H1 (cell line): ENCODE measurements at regions of chr12 and their contacts with region 1.

Region 1: GRCh38 chr12:14239350-14239934 is 126.0 kb upstream of the ATF7IP start:
- DNase-seq: peak in 1 of 2 experiments; percentile 61
- H3K4me3 ChIP-seq: peak overlapping the region in 1 of 4 experiments; percentile 26; a peak in 1 of 8 replicates
- H3K27ac ChIP-seq: no peak overlapping the region; the same call in 1 of the 2 replicates
- H3K4me1 ChIP-seq: peaks cover 2 to 12% (median 5%) of the 10 kb centered on the region in 4 experiments; a peak in 6 of 7 replicates
- H3K27me3 ChIP-seq: no peaks in the 10 kb centered on the region
- CTCF ChIP-seq: peak in 2 of 3 experiments; percentile 6 to 21; a peak in 2 of 4 replicates
- EP300 ChIP-seq: no peak
- POLR2A ChIP-seq: 0 out of 3 replicates have a peak, but pooled peaks of 1 of the 2 experiments have one; percentile 27
- RAD21 ChIP-seq: peak; percentile 22 to 35

Region 2: GRCh38 chr12:14185427-14186192 is 53.8 kb before region 1 on chr12:
- CTCF ChIA-PET with region 1: interaction called, 19 read pairs
- POLR2A ChIA-PET with region 1: no interaction called
- DNase-seq: peak in 1 of 2 experiments; percentile 60
- H3K4me3 ChIP-seq: no peak overlapping the region
- H3K27ac ChIP-seq: no peak overlapping the region
- H3K4me1 ChIP-seq: no peaks in the 10 kb centered on the region; a peak in 1 of 7 replicates
- H3K27me3 ChIP-seq: no peaks in the 10 kb centered on the region
- CTCF ChIP-seq: peak in 2 of 3 experiments; percentile 61 to 78; a peak in 3 of 4 replicates
- EP300 ChIP-seq: no peak
- POLR2A ChIP-seq: no peak
- RAD21 ChIP-seq: peak; percentile 74 to 80

Region 3: GRCh38 chr12:14357486-14357885 is 118.0 kb after region 1 on chr12:
- CTCF ChIA-PET with region 1: interaction called, 14 read pairs
- POLR2A ChIA-PET with region 1: no interaction called
- DNase-seq: no peak
- H3K4me3 ChIP-seq: no peak overlapping the region
- H3K27ac ChIP-seq: no peak overlapping the region
- H3K4me1 ChIP-seq: no peaks in the 10 kb centered on the region
- H3K27me3 ChIP-seq: no peaks in the 10 kb centered on the region
- CTCF ChIP-seq: no peak
- EP300 ChIP-seq: no peak
- POLR2A ChIP-seq: no peak
- RAD21 ChIP-seq: no peak

Region 4: GRCh38 chr12:14365294-14366208 is 126.1 kb after region 1 on chr12 and contains the start of gene ATF7IP:
- CTCF ChIA-PET with region 1: interaction called, 14 read pairs
- POLR2A ChIA-PET with region 1: interaction called, 17 read pairs
- DNase-seq: peak; percentile 88 to 93
- H3K4me3 ChIP-seq: peak within 1 kb of the TSS; percentile 65 to 90 (median 73)
- H3K27ac ChIP-seq: peak within 1 kb of the TSS; percentile 91
- H3K4me1 ChIP-seq: peaks cover 0 to under 1% (median 0%) of the 10 kb centered on the region in 4 experiments; a peak in 1 of 7 replicates
- H3K27me3 ChIP-seq: no peaks in the 10 kb centered on the region
- CTCF ChIP-seq: peak in 1 of 3 experiments; percentile 17; a peak in 2 of 4 replicates
- EP300 ChIP-seq: peak in 1 of 2 experiments; percentile 66; a peak in 1 of 3 replicates
- POLR2A ChIP-seq: peak; percentile 93 to 98
- RAD21 ChIP-seq: peak; percentile 19 to 26; a peak in 2 of 4 replicates
- total RNA-seq, gene ATF7IP: 148 and 149 TPM in 2 replicates

Region 5: DNA sequence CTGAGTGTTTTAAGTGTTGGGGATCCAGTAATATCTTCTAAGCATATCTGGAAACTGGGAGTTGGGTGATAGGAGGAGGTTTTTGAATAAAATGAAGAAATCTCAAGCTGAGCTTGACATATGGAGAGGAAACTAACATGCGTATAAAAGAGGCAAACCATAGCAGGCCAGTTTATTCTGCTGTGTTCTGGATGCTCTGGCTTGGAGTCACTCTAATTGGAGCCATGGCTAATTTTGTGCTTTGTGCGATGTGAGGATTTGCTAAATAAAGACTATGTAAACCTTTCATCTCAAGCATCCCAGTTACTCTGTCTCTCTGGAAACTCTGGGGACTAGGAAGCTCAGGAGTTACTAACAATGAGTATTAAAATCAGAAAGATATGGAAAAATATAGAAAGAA is 192.5 kb after region 1 on chr12:
- CTCF ChIA-PET with region 1: interaction called, 21 read pairs
- POLR2A ChIA-PET with region 1: no interaction called
- DNase-seq: no peak
- H3K4me3 ChIP-seq: no peak overlapping the region
- H3K27ac ChIP-seq: no peak overlapping the region
- H3K4me1 ChIP-seq: peaks cover 0 to 3% (median 0%) of the 10 kb centered on the region in 4 experiments; a peak in 1 of 7 replicates
- H3K27me3 ChIP-seq: peaks cover 0 to 1% (median 0%) of the 10 kb centered on the region in 4 experiments; a peak in 1 of 7 replicates
- CTCF ChIP-seq: no peak
- EP300 ChIP-seq: no peak
- POLR2A ChIP-seq: no peak
- RAD21 ChIP-seq: no peak

Region 6: DNA sequence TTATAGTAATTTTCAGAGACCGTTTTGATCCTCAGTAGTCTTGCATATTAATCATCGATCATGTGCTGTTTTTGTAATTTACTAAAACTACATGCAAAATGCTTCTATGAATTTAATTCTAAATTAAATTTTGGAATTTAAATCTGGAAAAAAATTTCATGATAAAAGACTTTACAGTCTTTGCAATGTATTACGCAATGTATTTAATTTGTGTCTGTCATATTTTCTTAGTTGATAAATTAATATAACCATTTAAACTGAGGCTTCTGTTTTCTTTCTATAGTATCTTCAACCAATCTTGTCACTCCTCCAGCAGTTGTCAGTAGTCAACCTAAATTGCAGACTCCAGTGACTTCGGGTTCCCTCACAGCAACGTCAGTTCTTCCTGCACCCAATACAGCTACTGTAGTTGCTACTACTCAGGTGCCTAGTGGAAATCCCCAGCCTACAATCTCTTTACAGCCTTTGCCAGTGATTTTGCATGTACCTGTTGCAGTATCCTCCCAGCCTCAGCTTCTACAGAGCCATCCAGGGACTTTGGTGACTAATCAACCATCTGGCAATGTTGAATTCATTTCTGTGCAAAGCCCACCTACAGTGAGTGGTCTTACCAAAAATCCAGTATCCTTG is 220.9 kb after region 1 on chr12:
- CTCF ChIA-PET with region 1: interaction called, 82 read pairs
- POLR2A ChIA-PET with region 1: no interaction called
- DNase-seq: no peak
- H3K4me3 ChIP-seq: no peak overlapping the region
- H3K27ac ChIP-seq: no peak overlapping the region
- H3K4me1 ChIP-seq: peaks cover 0 to 5% (median 0%) of the 10 kb centered on the region in 4 experiments; a peak in 2 of 7 replicates
- H3K27me3 ChIP-seq: no peaks in the 10 kb centered on the region
- CTCF ChIP-seq: no peak
- EP300 ChIP-seq: no peak
- POLR2A ChIP-seq: no peak
- RAD21 ChIP-seq: no peak

Region 7: GRCh38 chr12:14618983-14619382 is 379.5 kb after region 1 on chr12:
- CTCF ChIA-PET with region 1: interaction called, 24 read pairs
- POLR2A ChIA-PET with region 1: interaction called, 3 read pairs
- DNase-seq: no peak
- H3K4me3 ChIP-seq: no peak overlapping the region
- H3K27ac ChIP-seq: no peak overlapping the region
- H3K4me1 ChIP-seq: no peaks in the 10 kb centered on the region
- H3K27me3 ChIP-seq: peaks cover 0 to 2% (median 0%) of the 10 kb centered on the region in 4 experiments; a peak in 1 of 7 replicates
- CTCF ChIP-seq: peak in 2 of 3 experiments; percentile 34 to 57; a peak in 2 of 4 replicates
- EP300 ChIP-seq: no peak
- POLR2A ChIP-seq: no peak
- RAD21 ChIP-seq: peak; percentile 57 to 62